CD4-positive, alpha-beta memory T cell (primary cell): ENCODE measurements at regions of chrX and their contacts with region 1.

Region 1: GRCh38 chrX:47193475-47194193 is at the start of gene UBA1:
- DNase-seq: peak; percentile 95 to 97 (median 96)
- H3K4me3 ChIP-seq: peak within 1 kb of the TSS; percentile 69 to 82
- H3K4me3 Mint-ChIP-seq: peak within 1 kb of the TSS; percentile 97 to 99 (median 99)
- H3K27ac ChIP-seq: peak within 1 kb of the TSS; percentile 96
- H3K27ac Mint-ChIP-seq: peak within 1 kb of the TSS; percentile 94 to 100 (median 99)
- H3K4me1 ChIP-seq: peaks cover 64% of the 10 kb centered on the region
- H3K4me1 Mint-ChIP-seq: peaks cover 33 to 75% (median 62%) of the 10 kb centered on the region in 4 donors
- H3K27me3 ChIP-seq: no peaks in the 10 kb centered on the region
- H3K27me3 Mint-ChIP-seq: no peaks in the 10 kb centered on the region
- total RNA-seq, gene UBA1: 129 to 136 TPM

Region 2: DNA sequence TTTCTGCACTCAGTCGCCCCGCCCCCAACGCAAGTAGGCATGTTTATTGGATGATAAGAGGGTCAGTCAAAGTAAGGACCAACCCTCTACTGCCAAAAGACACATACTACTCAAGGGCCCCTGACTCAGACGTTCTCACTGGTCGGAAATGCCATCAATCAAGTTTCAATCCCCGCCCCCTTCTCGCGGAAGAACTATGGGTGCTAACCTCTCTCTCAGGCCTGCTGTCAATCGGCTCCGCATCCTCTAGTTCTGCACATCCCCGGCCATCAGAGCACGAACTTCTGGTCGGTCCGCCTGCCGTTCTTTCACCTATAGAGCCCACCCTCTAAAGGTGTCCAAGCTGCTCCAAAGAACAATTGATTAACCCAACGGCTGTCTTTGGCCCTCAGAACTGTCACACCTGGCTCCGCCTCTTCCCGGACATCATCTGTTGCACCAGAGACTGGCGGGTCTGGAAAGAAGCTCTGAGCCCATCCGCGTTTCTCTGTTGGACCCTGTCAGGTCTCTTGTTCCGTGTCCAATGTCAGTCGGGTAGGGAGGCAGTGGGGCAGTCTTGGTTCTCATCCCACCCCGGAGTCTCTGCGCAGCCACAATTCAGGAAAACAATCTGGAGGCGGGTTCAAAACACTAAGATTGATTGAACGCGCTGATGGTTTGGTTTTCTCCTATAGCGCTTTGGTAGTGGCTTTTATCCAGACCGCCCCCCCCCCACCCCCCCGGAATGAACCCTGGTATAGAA is 64.3 kb before region 1 on chrX:
- CTCF ChIA-PET with region 1: no interaction called
- POLR2A ChIA-PET with region 1: interaction called, 4 read pairs
- intact Hi-C with region 1: loop called (anchors 1 kb)
- DNase-seq: peak; percentile 91 to 93 (median 92)
- H3K4me3 ChIP-seq: peak overlapping the region; percentile 61 to 73
- H3K4me3 Mint-ChIP-seq: peak overlapping the region; percentile 92 to 99 (median 96)
- H3K27ac ChIP-seq: peak overlapping the region; percentile 64
- H3K27ac Mint-ChIP-seq: peak overlapping the region; percentile 95 to 98 (median 97)
- H3K4me1 ChIP-seq: no peaks in the 10 kb centered on the region
- H3K4me1 Mint-ChIP-seq: peaks cover 0 to 11% (median under 1%) of the 10 kb centered on the region in 4 donors
- H3K27me3 ChIP-seq: no peaks in the 10 kb centered on the region
- H3K27me3 Mint-ChIP-seq: no peaks in the 10 kb centered on the region

Region 3: GRCh38 chrX:47217642-47218279 is 24.1 kb after region 1 on chrX:
- CTCF ChIA-PET with region 1: interaction called, 3 read pairs
- POLR2A ChIA-PET with region 1: interaction called, 23 read pairs
- intact Hi-C with region 1: loop called (anchors 1 kb)
- DNase-seq: peak; percentile 98 to 100 (median 99)
- H3K4me3 ChIP-seq: peak overlapping the region; percentile 70 to 73
- H3K4me3 Mint-ChIP-seq: peak overlapping the region; percentile 89 to 99 (median 96)
- H3K27ac ChIP-seq: peak overlapping the region; percentile 99
- H3K27ac Mint-ChIP-seq: peak overlapping the region; percentile 95 to 100 (median 99)
- H3K4me1 ChIP-seq: peaks cover 30% of the 10 kb centered on the region
- H3K4me1 Mint-ChIP-seq: peaks cover 26 to 56% (median 41%) of the 10 kb centered on the region in 4 donors
- H3K27me3 ChIP-seq: no peaks in the 10 kb centered on the region
- H3K27me3 Mint-ChIP-seq: no peaks in the 10 kb centered on the region

Region 4: GRCh38 chrX:47311932-47312774 is 118.5 kb after region 1 on chrX:
- CTCF ChIA-PET with region 1: interaction called, 8 read pairs
- POLR2A ChIA-PET with region 1: no interaction called
- intact Hi-C with region 1: loop called (anchors 1 kb)
- DNase-seq: peak; percentile 40 to 62 (median 47)
- H3K4me3 ChIP-seq: no peak overlapping the region
- H3K4me3 Mint-ChIP-seq: no peak overlapping the region
- H3K27ac ChIP-seq: no peak overlapping the region
- H3K27ac Mint-ChIP-seq: no peak overlapping the region
- H3K4me1 ChIP-seq: no peaks in the 10 kb centered on the region
- H3K4me1 Mint-ChIP-seq: peaks cover 0 to 6% (median under 1%) of the 10 kb centered on the region in 4 donors
- H3K27me3 ChIP-seq: no peaks in the 10 kb centered on the region
- H3K27me3 Mint-ChIP-seq: no peaks in the 10 kb centered on the region

Region 5: DNA sequence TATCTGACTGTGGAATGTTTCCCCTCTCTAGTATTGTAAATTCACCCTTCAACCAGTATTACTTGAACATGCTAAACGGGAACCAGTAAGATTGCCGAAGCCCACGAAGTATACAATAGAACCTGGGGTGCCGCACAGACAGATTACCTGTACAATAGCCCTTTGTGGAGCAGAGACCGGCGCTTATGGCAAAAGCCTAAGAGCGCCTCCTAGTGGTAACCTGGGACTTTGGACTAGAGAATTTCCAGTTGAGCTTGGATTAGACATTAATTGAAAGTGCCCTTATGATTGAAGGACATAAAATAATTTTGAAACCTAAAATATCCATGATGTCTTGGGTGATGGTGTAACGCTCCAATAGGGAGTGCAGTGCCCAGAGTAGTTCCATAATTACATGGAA is 190.9 kb after region 1 on chrX:
- CTCF ChIA-PET with region 1: interaction called, 54 read pairs
- POLR2A ChIA-PET with region 1: interaction called, 11 read pairs
- intact Hi-C with region 1: loop called (anchors 1 kb)
- DNase-seq: peak; percentile 71 to 80 (median 77)
- H3K4me3 ChIP-seq: no peak overlapping the region
- H3K4me3 Mint-ChIP-seq: peak overlapping the region in 1 of 8 donors; percentile 43
- H3K27ac ChIP-seq: no peak overlapping the region
- H3K27ac Mint-ChIP-seq: peak overlapping the region in 2 of 7 donors; percentile 14 to 70
- H3K4me1 ChIP-seq: peaks cover 18% of the 10 kb centered on the region
- H3K4me1 Mint-ChIP-seq: peaks cover 9 to 20% (median 13%) of the 10 kb centered on the region in 4 donors
- H3K27me3 ChIP-seq: no peaks in the 10 kb centered on the region
- H3K27me3 Mint-ChIP-seq: no peaks in the 10 kb centered on the region

Region 6: DNA sequence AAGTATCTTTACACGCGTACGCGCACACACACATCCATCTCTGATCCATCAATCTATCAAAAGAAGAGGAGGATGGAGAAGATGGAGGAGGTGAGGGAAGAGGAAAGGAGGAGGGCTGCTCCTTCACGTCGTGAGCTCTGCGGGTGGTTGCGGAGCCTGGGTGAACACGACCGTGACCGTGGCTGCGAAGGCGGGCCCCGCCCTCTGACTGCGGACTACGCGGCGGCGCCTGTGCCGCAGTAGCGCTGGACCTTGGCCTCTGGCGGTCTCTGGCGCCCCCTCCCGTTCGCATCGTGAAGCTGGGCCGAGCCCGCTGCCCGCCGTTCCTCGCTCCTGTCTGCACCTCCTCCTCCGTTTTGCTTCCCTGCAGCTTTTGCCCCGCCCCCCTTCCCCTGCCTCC is 329.7 kb after region 1 on chrX:
- CTCF ChIA-PET with region 1: interaction called, 7 read pairs
- POLR2A ChIA-PET with region 1: interaction called, 5 read pairs
- intact Hi-C with region 1: loop called (anchors 1 kb)
- DNase-seq: peak; percentile 65 to 75 (median 70)
- H3K4me3 ChIP-seq: peak overlapping the region in 1 of 2 donors; percentile 32
- H3K4me3 Mint-ChIP-seq: peak overlapping the region; percentile 66 to 76 (median 74)
- H3K27ac ChIP-seq: no peak overlapping the region
- H3K27ac Mint-ChIP-seq: peak overlapping the region in 3 of 7 donors; percentile 17 to 25 (median 19)
- H3K4me1 ChIP-seq: peaks cover 5% of the 10 kb centered on the region
- H3K4me1 Mint-ChIP-seq: peaks cover 0 to 4% (median under 1%) of the 10 kb centered on the region in 4 donors
- H3K27me3 ChIP-seq: no peaks in the 10 kb centered on the region
- H3K27me3 Mint-ChIP-seq: no peaks in the 10 kb centered on the region

Region 7: GRCh38 chrX:47650164-47651042 is 456.8 kb after region 1 on chrX and contains the start of gene ELK1:
- CTCF ChIA-PET with region 1: no interaction called
- POLR2A ChIA-PET with region 1: interaction called, 3 read pairs
- intact Hi-C with region 1: loop called (anchors 1 kb)
- DNase-seq: peak; percentile 85 to 95 (median 90)
- H3K4me3 ChIP-seq: peak within 1 kb of the TSS in 1 of 2 donors; percentile 69
- H3K4me3 Mint-ChIP-seq: peak within 1 kb of the TSS; percentile 85 to 94 (median 88)
- H3K27ac ChIP-seq: peak within 1 kb of the TSS; percentile 74
- H3K27ac Mint-ChIP-seq: peak within 1 kb of the TSS; percentile 87 to 97 (median 97)
- H3K4me1 ChIP-seq: peaks cover 33% of the 10 kb centered on the region
- H3K4me1 Mint-ChIP-seq: peaks cover 31 to 42% (median 36%) of the 10 kb centered on the region in 4 donors
- H3K27me3 ChIP-seq: no peaks in the 10 kb centered on the region
- H3K27me3 Mint-ChIP-seq: no peaks in the 10 kb centered on the region
- total RNA-seq, gene ELK1: 36.4 to 38.3 TPM